CD4-positive, alpha-beta memory T cell (primary cell): ENCODE measurements at regions of chrX and their contacts with region 1.

Region 1: GRCh38 chrX:153934473-153935325 is at the start of gene NAA10:
- DNase-seq: peak; percentile 37 to 58 (median 47)
- H3K4me3 ChIP-seq: peak within 1 kb of the TSS; percentile 17 to 38
- H3K4me3 Mint-ChIP-seq: peak within 1 kb of the TSS; percentile 84 to 91 (median 90)
- H3K27ac ChIP-seq: peak within 1 kb of the TSS; percentile 51
- H3K27ac Mint-ChIP-seq: peak within 1 kb of the TSS; percentile 72 to 90 (median 81)
- H3K4me1 ChIP-seq: peaks cover 5% of the 10 kb centered on the region
- H3K4me1 Mint-ChIP-seq: peaks cover 8 to 32% (median 22%) of the 10 kb centered on the region in 4 donors
- H3K27me3 ChIP-seq: no peaks in the 10 kb centered on the region
- H3K27me3 Mint-ChIP-seq: no peaks in the 10 kb centered on the region
- total RNA-seq, gene NAA10: 88.9 to 94.9 TPM

Region 2: DNA sequence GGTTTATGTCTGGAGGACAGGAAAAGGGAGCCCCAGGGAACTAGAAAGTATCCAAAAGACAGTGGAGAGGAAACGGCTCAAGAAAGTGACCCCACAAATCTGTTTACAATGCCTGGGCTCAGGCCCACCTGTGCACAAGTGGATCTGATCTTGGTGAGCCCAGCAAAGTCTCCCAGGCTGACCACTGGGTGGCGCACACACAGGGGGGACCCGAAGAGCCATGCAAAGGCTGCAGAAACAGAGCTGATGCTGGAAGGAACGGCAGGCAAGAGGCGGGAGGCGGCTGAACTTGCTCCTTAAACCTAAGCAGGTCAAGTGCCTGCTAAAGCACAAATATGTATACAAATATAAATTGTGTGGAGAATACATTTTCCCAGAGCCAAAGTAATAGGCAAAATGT is 473.9 kb before region 1 on chrX:
- CTCF ChIA-PET with region 1: no interaction called
- POLR2A ChIA-PET with region 1: no interaction called
- intact Hi-C with region 1: no loop called
- DNase-seq: peak in 4 of 5 donors; percentile 30 to 47 (median 38)
- H3K4me3 ChIP-seq: no peak overlapping the region
- H3K4me3 Mint-ChIP-seq: no peak overlapping the region
- H3K27ac ChIP-seq: no peak overlapping the region
- H3K27ac Mint-ChIP-seq: no peak overlapping the region
- H3K4me1 ChIP-seq: no peaks in the 10 kb centered on the region
- H3K4me1 Mint-ChIP-seq: peaks cover 0 to 1% (median 0%) of the 10 kb centered on the region in 4 donors
- H3K27me3 ChIP-seq: no peaks in the 10 kb centered on the region
- H3K27me3 Mint-ChIP-seq: no peaks in the 10 kb centered on the region

Region 3: GRCh38 chrX:153909024-153909970 is 25.4 kb before region 1 on chrX:
- CTCF ChIA-PET with region 1: no interaction called
- POLR2A ChIA-PET with region 1: interaction called, 10 read pairs
- intact Hi-C with region 1: no loop called
- DNase-seq: no peak
- H3K4me3 ChIP-seq: no peak overlapping the region
- H3K4me3 Mint-ChIP-seq: no peak overlapping the region
- H3K27ac ChIP-seq: no peak overlapping the region
- H3K27ac Mint-ChIP-seq: no peak overlapping the region
- H3K4me1 ChIP-seq: peaks cover 16% of the 10 kb centered on the region
- H3K4me1 Mint-ChIP-seq: peaks cover 7 to 22% (median 12%) of the 10 kb centered on the region in 4 donors
- H3K27me3 ChIP-seq: no peaks in the 10 kb centered on the region
- H3K27me3 Mint-ChIP-seq: no peaks in the 10 kb centered on the region